ENCODE measurements at regions of chr15 and their contacts with region 1.

Region 1: GRCh38 chr15:52331490-52332240 is 36.1 kb upstream of the MYO5C start:
- DNase-seq: peak; percentile 76
- H3K4me3 Mint-ChIP-seq: no peak overlapping the region
- H3K27ac Mint-ChIP-seq: peak overlapping the region; percentile 7
- H3K4me1 Mint-ChIP-seq: peaks cover 11% of the 10 kb centered on the region
- H3K27me3 Mint-ChIP-seq: no peaks in the 10 kb centered on the region

Region 2: GRCh38 chr15:51982013-51982769 is 349.5 kb before region 1 on chr15:
- CTCF ChIA-PET with region 1: no interaction called
- intact Hi-C with region 1: no loop called
- DNase-seq: peak; percentile 52
- H3K4me3 Mint-ChIP-seq: peak overlapping the region; percentile 62
- H3K27ac Mint-ChIP-seq: peak overlapping the region; percentile 25
- H3K4me1 Mint-ChIP-seq: peaks cover 10% of the 10 kb centered on the region
- H3K27me3 Mint-ChIP-seq: no peaks in the 10 kb centered on the region

Region 3: DNA sequence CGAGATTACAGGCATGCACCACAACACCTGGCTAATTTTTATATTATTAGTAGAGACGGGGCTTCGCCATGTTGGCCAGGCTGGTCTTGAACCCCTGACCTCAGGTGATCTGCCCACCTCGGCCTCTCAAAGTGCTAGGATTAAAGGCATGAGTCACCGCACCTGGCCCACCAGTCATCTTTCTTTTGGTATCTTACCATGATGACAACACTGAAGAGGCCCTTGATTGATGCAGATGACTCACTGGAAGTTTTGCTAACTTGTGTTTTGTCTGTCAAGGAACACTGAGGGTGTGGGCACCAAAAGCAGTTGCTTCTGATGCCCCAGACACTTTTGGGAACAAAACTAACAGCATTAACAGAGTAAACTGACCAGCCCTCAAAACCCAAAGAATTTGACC is 108.7 kb after region 1 on chr15:
- CTCF ChIA-PET with region 1: no interaction called
- intact Hi-C with region 1: loop called (anchors 5 kb)
- DNase-seq: peak; percentile 56
- H3K4me3 Mint-ChIP-seq: no peak overlapping the region
- H3K27ac Mint-ChIP-seq: no peak overlapping the region
- H3K4me1 Mint-ChIP-seq: peaks cover 24% of the 10 kb centered on the region
- H3K27me3 Mint-ChIP-seq: no peaks in the 10 kb centered on the region

Region 4: GRCh38 chr15:52528991-52529926 is 197.6 kb after region 1 on chr15:
- CTCF ChIA-PET with region 1: no interaction called
- intact Hi-C with region 1: loop called (anchors 1 kb)
- DNase-seq: peak; percentile 81
- H3K4me3 Mint-ChIP-seq: peak overlapping the region; percentile 74
- H3K27ac Mint-ChIP-seq: peak overlapping the region; percentile 47
- H3K4me1 Mint-ChIP-seq: peaks cover 13% of the 10 kb centered on the region
- H3K27me3 Mint-ChIP-seq: no peaks in the 10 kb centered on the region

Region 5: DNA sequence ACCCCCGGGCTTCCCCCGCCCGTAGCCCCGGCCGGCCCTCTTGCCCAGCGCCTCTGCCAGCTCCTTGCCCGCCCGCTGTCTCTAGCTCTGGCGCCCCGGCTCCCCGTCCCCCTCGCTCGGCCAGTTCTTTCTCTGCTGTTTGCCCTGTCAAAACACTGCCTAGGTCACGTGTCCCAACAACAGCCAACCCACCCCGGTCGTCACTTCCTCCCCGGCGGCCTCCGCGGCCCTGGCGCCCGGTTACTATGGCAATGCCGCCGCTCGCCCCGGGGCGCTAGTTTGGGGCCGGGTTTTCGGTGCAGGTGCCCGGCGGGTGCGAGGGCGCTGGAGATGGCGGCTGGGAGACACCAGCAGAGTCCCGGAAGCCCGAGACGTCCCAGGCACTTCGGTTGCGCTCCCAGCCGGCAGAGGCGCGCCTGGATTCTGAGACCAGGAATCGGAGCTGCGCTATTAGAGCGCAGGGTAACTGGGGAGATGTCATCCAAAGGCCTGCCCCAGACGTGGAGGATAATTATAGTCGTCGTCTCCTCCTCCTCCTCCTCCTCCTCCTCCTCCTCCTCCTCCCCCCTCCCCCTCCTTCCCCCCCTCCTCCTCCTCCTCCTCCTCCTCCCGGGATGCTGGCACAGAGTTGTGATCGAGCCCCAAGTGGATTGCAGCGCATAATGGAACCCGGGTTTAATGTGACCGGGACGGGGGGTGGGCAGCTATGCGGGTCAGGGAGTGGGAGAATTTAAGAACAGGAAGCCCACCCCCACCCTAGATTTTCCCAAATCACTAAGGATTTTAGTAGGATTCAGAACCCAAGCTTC is 347.8 kb after region 1 on chr15 and contains the start of gene ATOSA:
- CTCF ChIA-PET with region 1: no interaction called
- intact Hi-C with region 1: loop called (anchors 1 kb)
- DNase-seq: peak; percentile 93
- H3K4me3 Mint-ChIP-seq: peak within 1 kb of the TSS; percentile 100
- H3K27ac Mint-ChIP-seq: peak within 1 kb of the TSS; percentile 98
- H3K4me1 Mint-ChIP-seq: peaks cover 39% of the 10 kb centered on the region
- H3K27me3 Mint-ChIP-seq: no peaks in the 10 kb centered on the region
- total RNA-seq, gene ATOSA: 19.4 to 21.7 TPM

Region 6: GRCh38 chr15:52735231-52736089 is 403.8 kb after region 1 on chr15:
- CTCF ChIA-PET with region 1: interaction called, 13 read pairs
- intact Hi-C with region 1: loop called (anchors 1 kb)
- DNase-seq: peak; percentile 84
- H3K4me3 Mint-ChIP-seq: no peak overlapping the region
- H3K27ac Mint-ChIP-seq: no peak overlapping the region
- H3K4me1 Mint-ChIP-seq: peaks cover 11% of the 10 kb centered on the region
- H3K27me3 Mint-ChIP-seq: no peaks in the 10 kb centered on the region